ENCODE measurements at regions of chr4 and their contacts with region 1.

Region 1: DNA sequence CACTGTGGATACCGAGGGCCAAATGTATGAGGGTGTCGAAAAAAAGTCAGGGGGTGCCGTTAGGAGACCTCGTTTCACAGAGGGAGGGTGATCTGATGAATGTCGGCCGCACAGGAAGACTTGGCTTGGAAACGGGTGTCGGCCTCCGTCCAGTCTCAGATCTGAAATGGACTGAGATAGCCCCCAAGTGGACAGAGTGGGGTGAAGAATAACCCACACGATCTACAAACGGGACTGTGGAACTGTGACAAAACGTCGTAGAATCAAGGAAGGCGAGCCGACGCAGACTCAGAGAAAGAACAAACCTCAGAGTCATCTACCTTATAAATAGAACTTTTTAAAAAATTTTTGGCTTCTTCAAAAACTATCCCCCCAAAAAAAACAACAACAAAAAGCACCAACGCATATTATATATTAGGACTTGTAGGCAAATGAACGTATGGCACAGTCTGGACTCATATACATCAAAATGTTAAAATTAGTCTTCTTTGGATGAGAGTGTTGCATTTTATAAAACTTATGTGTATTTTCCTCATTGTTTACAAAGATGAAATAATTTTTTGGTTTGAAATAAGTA is 63.8 kb upstream of the IRF2 start:
- DNase-seq: peak; percentile 62 to 94
- H3K4me3 ChIP-seq: peak overlapping the region; percentile 66 to 70
- H3K27ac ChIP-seq: peak overlapping the region; percentile 88 to 89
- H3K4me1 ChIP-seq: peaks cover 2 to 20% of the 10 kb centered on the region in 2 donors
- H3K27me3 ChIP-seq: no peaks in the 10 kb centered on the region
- CTCF ChIP-seq: peak; percentile 51 to 71 (median 69)

Region 2: GRCh38 chr4:182917182-182918043 is 1620.7 kb before region 1 on chr4 and contains the start of gene DCTD:
- intact Hi-C with region 1: loop called (anchors 5 kb)
- DNase-seq: peak; percentile 23 to 88
- H3K4me3 ChIP-seq: peak within 1 kb of the TSS; percentile 76 to 87
- H3K27ac ChIP-seq: peak within 1 kb of the TSS; percentile 86 to 99
- H3K4me1 ChIP-seq: peaks cover 0 to 8% of the 10 kb centered on the region in 2 donors
- H3K27me3 ChIP-seq: no peaks in the 10 kb centered on the region
- CTCF ChIP-seq: peak in 2 of 3 experiments; percentile 38 to 44
- total RNA-seq, gene DCTD: 17.2 TPM

Region 3: GRCh38 chr4:184287697-184288255 is 250.3 kb before region 1 on chr4:
- intact Hi-C with region 1: loop called (anchors 1 kb)
- DNase-seq: no peak
- H3K4me3 ChIP-seq: no peak overlapping the region
- H3K27ac ChIP-seq: no peak overlapping the region
- H3K4me1 ChIP-seq: peaks cover 0 to 3% of the 10 kb centered on the region in 2 donors
- H3K27me3 ChIP-seq: no peaks in the 10 kb centered on the region
- CTCF ChIP-seq: peak; percentile 8 to 48 (median 14)

Region 4: DNA sequence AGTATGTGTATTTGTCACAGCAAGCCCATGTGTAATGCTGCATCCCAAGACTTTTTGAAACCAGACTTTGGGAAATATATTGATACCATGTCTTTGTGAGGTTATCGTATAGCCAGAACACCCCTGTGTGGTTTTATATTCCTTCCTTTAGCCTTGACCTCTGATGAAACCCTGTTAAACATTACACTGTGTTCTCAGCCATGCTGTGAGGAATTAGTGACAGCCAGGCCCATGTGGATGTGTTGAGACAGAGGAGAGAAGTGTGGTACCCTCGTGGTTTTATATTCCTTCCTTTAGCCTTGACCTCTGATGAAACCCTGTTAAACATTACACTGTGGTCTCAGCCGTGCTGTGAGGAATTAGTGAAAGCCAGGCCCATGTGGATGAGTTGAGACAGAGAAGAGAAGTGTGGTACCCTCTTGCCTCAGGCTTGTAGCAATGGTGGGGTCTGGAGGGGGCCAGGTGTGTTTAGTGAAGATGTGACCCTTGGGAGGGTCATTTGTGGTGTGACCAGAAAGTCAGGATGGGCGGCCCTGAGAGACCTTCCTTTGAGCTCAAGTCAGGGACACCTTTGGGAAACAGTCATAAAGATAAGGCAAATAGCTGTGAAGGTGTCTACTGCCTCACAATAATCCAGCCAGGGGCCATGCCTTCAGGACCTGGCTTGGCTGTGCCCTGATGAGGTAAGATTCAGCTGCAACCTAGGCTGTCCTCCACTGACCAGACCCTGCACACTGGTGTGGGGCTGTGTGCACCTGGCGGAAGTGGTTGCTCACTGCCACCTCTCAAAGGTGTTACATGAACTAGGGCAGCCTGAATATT is 173.8 kb before region 1 on chr4:
- intact Hi-C with region 1: loop called (anchors 5 kb)
- DNase-seq: no peak
- H3K4me3 ChIP-seq: no peak overlapping the region
- H3K27ac ChIP-seq: no peak overlapping the region
- H3K4me1 ChIP-seq: peaks cover 0 to 16% of the 10 kb centered on the region in 2 donors
- H3K27me3 ChIP-seq: no peaks in the 10 kb centered on the region
- CTCF ChIP-seq: no peak

Region 5: DNA sequence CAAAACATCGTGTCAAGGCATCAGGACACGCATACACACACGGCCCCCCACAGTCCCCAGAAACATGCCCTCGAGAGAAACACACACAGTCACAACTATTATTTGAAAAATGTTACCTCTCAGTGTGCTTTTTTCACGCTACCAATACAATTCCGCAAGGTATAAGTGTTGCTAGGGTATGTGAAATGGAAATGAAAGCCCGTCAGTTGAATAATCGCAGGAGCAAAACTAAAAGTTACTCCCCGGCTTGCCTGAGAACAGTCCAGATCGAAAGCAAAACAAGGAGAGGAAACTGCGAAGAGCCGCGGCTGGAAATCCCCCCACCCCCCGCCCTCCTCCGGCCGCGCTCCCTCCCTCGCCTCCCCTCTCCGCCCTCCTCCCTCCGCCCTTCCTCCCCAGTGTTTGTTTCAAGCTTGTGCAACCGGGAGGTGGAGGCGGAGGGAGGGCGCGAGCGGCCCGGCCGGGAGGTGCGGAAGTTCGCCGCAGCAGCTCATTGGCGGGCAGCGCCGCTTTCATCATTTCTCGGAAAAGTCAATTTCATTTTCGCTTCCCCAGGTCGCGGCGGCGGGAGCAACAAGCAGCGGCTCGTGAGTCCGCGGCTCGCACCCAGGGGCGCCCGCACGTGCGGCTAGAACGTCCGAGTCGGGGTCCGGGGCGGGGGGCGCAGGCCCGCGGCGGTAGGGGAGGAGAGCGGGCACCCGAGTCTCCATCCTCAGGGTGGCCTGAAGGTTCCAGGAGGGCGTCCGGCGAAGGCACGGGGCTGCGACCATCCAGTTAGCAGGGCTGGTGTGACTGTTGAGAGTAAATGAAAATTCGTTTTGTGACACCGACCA is 63.6 kb before region 1 on chr4 and contains the start of gene IRF2:
- intact Hi-C with region 1: loop called (anchors 1 kb)
- DNase-seq: peak; percentile 87 to 98
- H3K4me3 ChIP-seq: peak within 1 kb of the TSS; percentile 89 to 95
- H3K27ac ChIP-seq: peak within 1 kb of the TSS; percentile 96 to 98
- H3K4me1 ChIP-seq: peaks cover 0 to 18% of the 10 kb centered on the region in 2 donors
- H3K27me3 ChIP-seq: no peaks in the 10 kb centered on the region
- CTCF ChIP-seq: peak in 2 of 3 experiments; percentile 7 to 15
- total RNA-seq, gene IRF2: 39.6 TPM

Region 6: DNA sequence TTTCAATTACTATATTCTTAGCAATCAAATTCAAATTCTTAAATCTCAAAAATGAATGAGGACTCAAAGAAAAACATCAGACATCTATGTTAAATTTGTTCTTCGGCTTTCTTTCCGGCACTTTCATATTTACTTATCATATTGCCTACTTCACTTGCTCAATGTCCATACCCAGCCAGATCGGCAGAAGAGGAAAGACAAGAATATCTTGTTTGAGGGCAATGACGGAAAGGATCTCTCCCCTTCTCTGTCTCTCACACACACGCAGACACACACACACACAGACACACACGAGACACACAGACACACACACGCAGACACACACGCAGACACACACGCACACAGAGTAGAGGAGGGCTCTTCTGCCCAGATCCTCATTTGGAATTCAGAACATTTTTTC is 50.6 kb before region 1 on chr4:
- intact Hi-C with region 1: no loop called
- DNase-seq: no peak
- H3K4me3 ChIP-seq: no peak overlapping the region
- H3K27ac ChIP-seq: no peak overlapping the region
- H3K4me1 ChIP-seq: no peaks in the 10 kb centered on the region
- H3K27me3 ChIP-seq: no peaks in the 10 kb centered on the region
- CTCF ChIP-seq: no peak

Region 7: DNA sequence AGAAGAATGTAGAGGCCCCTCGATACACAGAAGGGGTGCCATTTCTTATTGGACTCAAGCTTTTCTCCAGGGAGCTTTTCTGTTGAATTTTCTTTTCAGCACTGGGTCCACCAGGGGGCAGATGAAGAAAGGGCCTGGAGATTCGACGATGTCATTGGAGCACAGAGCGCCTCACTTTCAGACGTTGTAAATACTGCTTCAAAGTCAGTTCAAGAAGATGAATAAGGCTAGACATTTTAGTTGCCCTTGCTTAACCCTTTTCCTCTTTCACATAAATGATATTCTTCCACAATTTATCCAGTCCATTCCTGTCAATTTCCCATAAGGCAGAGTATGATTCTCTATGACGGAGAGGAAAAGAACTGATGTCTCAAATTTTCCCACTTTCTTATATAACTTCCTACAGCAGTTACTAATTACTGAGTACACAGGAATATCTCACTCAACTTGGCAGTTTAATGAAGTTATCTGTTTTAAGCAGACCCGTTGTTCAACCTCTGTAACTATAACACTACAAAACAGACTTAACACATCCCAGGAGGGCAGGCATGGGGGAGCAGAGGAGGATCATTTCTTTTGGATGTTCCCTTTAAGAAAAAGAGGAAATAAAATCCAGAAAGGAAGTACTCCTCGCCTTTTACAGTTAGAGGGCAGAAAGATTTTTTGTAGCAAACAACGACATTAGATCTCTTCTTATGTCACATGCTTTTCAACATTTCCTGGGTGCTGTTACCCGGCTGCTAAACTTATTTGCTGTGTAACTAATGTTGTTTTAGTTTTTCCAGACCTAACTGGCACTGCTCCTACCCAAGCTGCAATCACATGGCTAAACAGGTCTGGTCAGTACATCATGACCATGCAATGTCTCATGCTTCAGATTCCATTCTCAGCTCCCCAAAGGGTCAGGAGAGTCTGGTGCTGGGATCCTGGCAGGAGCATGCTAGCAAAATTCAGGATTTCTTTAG is 208.0 kb after region 1 on chr4:
- intact Hi-C with region 1: loop called (anchors 5 kb)
- DNase-seq: peak; percentile 17 to 86
- H3K4me3 ChIP-seq: peak overlapping the region in 1 of 2 donors; percentile 36
- H3K27ac ChIP-seq: peak overlapping the region; percentile 74 to 77
- H3K4me1 ChIP-seq: peaks cover 6 to 26% of the 10 kb centered on the region in 2 donors
- H3K27me3 ChIP-seq: no peaks in the 10 kb centered on the region
- CTCF ChIP-seq: peak; percentile 57 to 78 (median 71)

Measured in ascending aorta (tissue), 2 donors.